Activated CD8-positive, alpha-beta memory T cell treated with anti-CD3 and anti-CD28 coated beads, Interleukin-2, amount 10 ng/mL, durations not matched to agents 7 days and 5 days (primary cell): ENCODE measurements at regions of chr1 and their contacts with region 1.

Region 1: GRCh38 chr1:39196244-39197215 is 8.0 kb upstream of the MACF1 start:
- DNase-seq: peak; percentile 83
- ATAC-seq: peak; percentile 46
- H3K4me3 Mint-ChIP-seq: peak overlapping the region; percentile 63
- H3K27ac Mint-ChIP-seq: peak overlapping the region; percentile 99
- H3K4me1 Mint-ChIP-seq: peaks cover 72% of the 10 kb centered on the region
- H3K27me3 Mint-ChIP-seq: no peaks in the 10 kb centered on the region

Region 2: GRCh38 chr1:39098546-39099250 is 97.8 kb before region 1 on chr1:
- CTCF ChIA-PET with region 1: interaction called, 72 read pairs
- DNase-seq: peak; percentile 78
- ATAC-seq: peak; percentile 89
- H3K4me3 Mint-ChIP-seq: no peak overlapping the region
- H3K27ac Mint-ChIP-seq: no peak overlapping the region
- H3K4me1 Mint-ChIP-seq: peaks cover 22% of the 10 kb centered on the region
- H3K27me3 Mint-ChIP-seq: no peaks in the 10 kb centered on the region

Region 3: DNA sequence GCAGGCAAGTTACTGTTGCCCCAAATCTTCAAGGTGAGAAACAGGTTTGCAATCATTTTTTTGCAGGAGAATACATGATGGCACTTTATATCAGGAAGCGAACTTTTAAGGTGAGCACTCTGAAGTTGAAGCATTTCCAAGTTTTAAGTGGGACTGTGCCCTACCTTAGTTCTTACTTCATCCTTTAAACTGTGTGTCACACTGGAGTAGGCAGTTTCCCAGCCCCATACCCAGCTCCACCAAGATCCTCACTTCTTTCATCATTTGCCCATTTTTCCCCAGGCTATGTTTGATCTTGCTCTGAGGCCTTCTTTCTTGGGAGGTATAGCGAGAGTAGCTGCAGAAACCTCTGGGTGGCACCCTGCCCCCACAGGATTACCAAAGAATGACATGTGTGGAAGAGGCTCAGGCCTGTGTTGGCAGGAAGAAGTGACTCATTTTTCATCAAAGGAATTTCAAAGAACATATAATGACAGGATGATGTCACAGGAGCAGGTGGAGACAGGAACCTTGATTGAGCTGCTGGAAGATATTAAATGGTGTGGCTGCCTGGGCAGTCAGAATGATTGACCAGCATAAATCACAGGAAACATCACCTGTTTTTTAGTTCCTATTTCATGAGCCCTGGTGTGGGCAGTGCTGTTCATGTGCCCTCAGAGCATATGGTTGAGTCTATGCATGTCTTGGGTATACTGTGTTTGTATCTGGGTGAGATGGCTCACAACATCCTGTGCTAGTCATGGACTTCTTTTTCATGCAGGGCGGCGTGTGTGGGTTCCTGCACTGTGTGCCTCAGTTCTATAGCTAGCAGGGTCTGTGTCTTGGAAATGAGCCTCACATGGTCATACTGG is 12.8 kb before region 1 on chr1:
- CTCF ChIA-PET with region 1: interaction called, 20 read pairs
- DNase-seq: peak; percentile 85
- ATAC-seq: peak; percentile 84
- H3K4me3 Mint-ChIP-seq: no peak overlapping the region
- H3K27ac Mint-ChIP-seq: peak overlapping the region; percentile 71
- H3K4me1 Mint-ChIP-seq: peaks cover 46% of the 10 kb centered on the region
- H3K27me3 Mint-ChIP-seq: no peaks in the 10 kb centered on the region

Region 4: DNA sequence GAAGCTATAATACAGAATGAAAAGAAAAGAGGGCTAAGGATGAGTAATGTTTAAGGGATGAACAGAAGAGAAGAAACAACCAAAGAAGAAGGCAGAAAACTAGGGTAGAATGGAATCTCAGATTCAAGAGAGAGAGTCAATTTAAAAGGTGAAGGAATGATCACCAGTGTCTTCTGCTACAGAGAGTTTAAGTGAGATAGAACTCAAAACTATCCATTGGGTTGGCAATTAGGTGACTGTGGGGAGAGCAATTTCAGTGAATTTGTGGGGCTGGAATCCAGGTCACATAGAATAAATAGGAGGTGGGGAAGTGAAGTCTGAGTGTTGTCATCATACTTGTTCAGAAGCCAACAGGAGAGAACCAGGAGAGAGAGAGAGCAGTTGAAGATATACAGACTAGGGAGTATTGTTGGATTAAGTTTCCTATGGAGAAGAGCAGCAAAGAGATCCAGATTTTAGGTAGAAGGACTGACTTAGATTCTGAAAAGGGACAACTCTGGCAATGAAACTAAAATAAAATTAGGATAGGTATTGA is 27.8 kb after region 1 on chr1:
- CTCF ChIA-PET with region 1: interaction called, 21 read pairs
- DNase-seq: no peak
- ATAC-seq: no peak
- H3K4me3 Mint-ChIP-seq: no peak overlapping the region
- H3K27ac Mint-ChIP-seq: no peak overlapping the region
- H3K4me1 Mint-ChIP-seq: peaks cover 50% of the 10 kb centered on the region
- H3K27me3 Mint-ChIP-seq: no peaks in the 10 kb centered on the region

Region 5: GRCh38 chr1:39250460-39251240 is 54.1 kb after region 1 on chr1:
- CTCF ChIA-PET with region 1: interaction called, 245 read pairs
- DNase-seq: no peak
- ATAC-seq: no peak
- H3K4me3 Mint-ChIP-seq: no peak overlapping the region
- H3K27ac Mint-ChIP-seq: peak overlapping the region; percentile 45
- H3K4me1 Mint-ChIP-seq: peaks cover 9% of the 10 kb centered on the region
- H3K27me3 Mint-ChIP-seq: no peaks in the 10 kb centered on the region

Region 6: DNA sequence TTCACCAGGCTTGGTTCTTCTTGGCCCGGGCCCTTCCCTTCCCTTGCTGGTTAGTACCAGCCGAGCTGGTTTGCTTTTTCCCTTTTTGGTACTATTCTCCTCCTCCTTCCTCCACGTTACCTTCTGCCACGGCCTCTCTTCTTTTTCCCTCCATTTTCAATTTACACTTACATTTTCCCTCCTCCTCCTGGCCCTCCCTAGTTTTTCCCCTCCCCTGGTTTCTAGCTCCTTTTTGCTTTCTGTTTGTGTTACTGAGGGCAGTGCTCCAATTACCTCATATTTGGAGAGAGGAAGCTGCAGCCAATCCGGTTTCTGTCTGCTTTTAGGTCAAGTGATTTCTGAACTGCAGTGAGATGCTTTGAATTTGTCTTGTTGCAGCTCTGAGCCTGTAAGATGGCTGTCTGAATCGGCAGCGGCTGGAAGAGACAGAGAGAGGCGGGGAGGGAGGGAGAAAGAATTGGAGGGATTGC is 71.6 kb after region 1 on chr1:
- CTCF ChIA-PET with region 1: interaction called, 245 read pairs
- DNase-seq: no peak
- ATAC-seq: peak; percentile 54
- H3K4me3 Mint-ChIP-seq: peak overlapping the region; percentile 41
- H3K27ac Mint-ChIP-seq: peak overlapping the region; percentile 77
- H3K4me1 Mint-ChIP-seq: peaks cover 71% of the 10 kb centered on the region
- H3K27me3 Mint-ChIP-seq: no peaks in the 10 kb centered on the region